Calu3 (cell line): ENCODE measurements at regions of chr6 and their contacts with region 1.

Region 1: DNA sequence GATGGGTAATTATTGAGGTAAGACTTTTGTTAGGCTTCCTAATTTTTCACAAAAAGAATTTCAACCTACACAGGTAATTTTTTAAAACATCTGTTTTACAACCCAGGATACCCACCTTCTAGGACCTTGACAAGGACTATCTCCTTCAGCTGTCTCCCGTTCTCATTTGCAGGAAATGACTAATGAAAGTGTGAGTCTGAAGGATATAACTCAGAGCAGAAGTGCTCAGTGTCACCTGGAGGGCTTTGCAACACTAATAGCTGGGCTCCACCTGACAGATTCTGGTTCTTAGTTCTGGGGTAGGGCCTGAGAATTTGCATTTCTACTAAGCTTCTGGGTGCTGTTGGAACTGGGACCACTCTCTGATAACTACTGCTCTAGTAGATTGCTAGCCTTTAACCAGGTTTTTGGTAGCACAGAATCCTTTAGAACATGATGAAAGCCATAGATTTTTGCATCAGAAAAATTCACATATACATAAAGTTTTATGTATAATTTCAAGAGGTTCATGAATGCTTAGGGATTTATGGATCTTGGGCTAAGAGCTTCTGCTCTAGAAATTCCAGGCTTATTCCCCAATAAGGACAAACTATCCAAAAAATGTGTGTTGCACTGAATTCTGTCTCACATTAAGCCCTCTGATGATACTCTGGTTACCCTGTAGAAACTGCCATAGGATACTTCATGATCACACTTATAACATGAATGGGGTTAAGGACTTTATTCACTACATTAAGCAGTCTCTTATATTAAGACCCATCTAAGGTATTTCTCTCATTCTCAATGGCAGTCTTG is 30.3 kb downstream of the AK9 start:
- DNase-seq: no peak
- H3K4me3 Mint-ChIP-seq: no peak overlapping the region
- H3K27ac Mint-ChIP-seq: no peak overlapping the region
- H3K4me1 Mint-ChIP-seq: no peaks in the 10 kb centered on the region
- H3K27me3 Mint-ChIP-seq: no peaks in the 10 kb centered on the region
- CTCF ChIP-seq: no peak

Region 2: GRCh38 chr6:109610590-109610989 is 50.1 kb before region 1 on chr6:
- CTCF ChIA-PET with region 1: no interaction called
- intact Hi-C with region 1: loop called (anchors 5 kb)
- DNase-seq: no peak
- H3K4me3 Mint-ChIP-seq: no peak overlapping the region
- H3K27ac Mint-ChIP-seq: no peak overlapping the region
- H3K4me1 Mint-ChIP-seq: no peaks in the 10 kb centered on the region
- H3K27me3 Mint-ChIP-seq: no peaks in the 10 kb centered on the region
- CTCF ChIP-seq: no peak